ENCODE measurements at regions of chr16 and their contacts with region 1.

Region 1: GRCh38 chr16:29862884-29863668 is at the start of gene CDIPT:
- DNase-seq: peak; percentile 97
- ATAC-seq: peak; percentile 94
- H3K4me3 ChIP-seq: peak within 1 kb of the TSS; percentile 85 to 95 (median 88)
- H3K27ac ChIP-seq: peak within 1 kb of the TSS; percentile 97
- H3K4me1 ChIP-seq: peaks cover 37% of the 10 kb centered on the region
- H3K27me3 ChIP-seq: no peaks in the 10 kb centered on the region; a peak in 1 of 5 replicates
- CTCF ChIP-seq: peak; percentile 95
- EP300 ChIP-seq: peak in 1 of 2 experiments; percentile 50; a peak in 3 of 4 replicates
- POLR2A ChIP-seq: peak; percentile 42 to 64
- RAD21 ChIP-seq: peak; percentile 65; the same call in 1 of the 2 replicates
- total RNA-seq, gene CDIPT: 39.2 and 54.9 TPM in 2 replicates

Region 2: DNA sequence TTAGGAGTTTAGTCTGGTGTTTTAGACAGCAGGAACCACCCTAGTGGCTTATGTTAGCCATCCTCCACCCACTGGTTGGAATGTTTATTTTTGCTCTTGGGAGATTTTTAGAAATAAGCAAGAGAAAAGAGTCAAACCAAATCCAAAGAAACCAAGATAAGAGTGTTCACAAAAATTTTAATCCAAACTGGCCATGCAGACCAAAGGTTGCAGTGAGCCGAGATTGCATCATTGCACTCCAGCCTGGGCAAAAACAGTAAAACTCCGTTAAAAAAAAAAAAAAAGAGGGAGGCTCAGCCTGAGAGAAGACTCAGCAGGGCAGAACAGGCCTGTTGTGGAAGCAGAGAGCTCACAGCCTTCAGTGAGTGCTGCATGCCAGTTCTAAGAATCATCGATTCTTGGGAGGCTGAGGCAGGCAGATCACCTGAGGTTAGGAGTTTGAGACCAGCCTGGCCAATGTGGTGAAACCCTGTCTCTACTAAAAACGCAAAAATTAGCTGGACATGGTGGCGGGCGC is 105.1 kb before region 1 on chr16:
- CTCF ChIA-PET with region 1: no interaction called
- POLR2A ChIA-PET with region 1: no interaction called
- in situ Hi-C with region 1: no loop called
- intact Hi-C with region 1: no loop called
- DNase-seq: peak; percentile 82
- ATAC-seq: peak; percentile 80
- H3K4me3 ChIP-seq: peak overlapping the region in 2 of 3 experiments; percentile 25 to 41; a peak in 3 of 6 replicates
- H3K27ac ChIP-seq: peak overlapping the region; percentile 69
- H3K4me1 ChIP-seq: peaks cover 79% of the 10 kb centered on the region
- H3K27me3 ChIP-seq: no peaks in the 10 kb centered on the region
- CTCF ChIP-seq: peak; percentile 47
- EP300 ChIP-seq: peak in 1 of 2 experiments; percentile 58; a peak in 2 of 4 replicates
- POLR2A ChIP-seq: no peak
- RAD21 ChIP-seq: no peak

Region 3: GRCh38 chr16:29825145-29826044 is 37.7 kb before region 1 on chr16:
- CTCF ChIA-PET with region 1: no interaction called
- POLR2A ChIA-PET with region 1: interaction called, 18 read pairs
- in situ Hi-C with region 1: no loop called
- intact Hi-C with region 1: loop called (anchors 5 kb)
- DNase-seq: no peak
- ATAC-seq: peak; percentile 2; the same call in 2 of the 3 replicates
- H3K4me3 ChIP-seq: no peak overlapping the region
- H3K27ac ChIP-seq: peak overlapping the region; percentile 16
- H3K4me1 ChIP-seq: peaks cover 100% of the 10 kb centered on the region
- H3K27me3 ChIP-seq: no peaks in the 10 kb centered on the region
- CTCF ChIP-seq: no peak
- EP300 ChIP-seq: no peak
- POLR2A ChIP-seq: no peak
- RAD21 ChIP-seq: no peak

Region 4: GRCh38 chr16:29848420-29849297 is 14.4 kb before region 1 on chr16:
- CTCF ChIA-PET with region 1: no interaction called
- POLR2A ChIA-PET with region 1: interaction called, 11 read pairs
- in situ Hi-C with region 1: no loop called
- intact Hi-C with region 1: no loop called
- DNase-seq: peak; percentile 65
- ATAC-seq: peak; percentile 90
- H3K4me3 ChIP-seq: no peak overlapping the region
- H3K27ac ChIP-seq: no peak overlapping the region
- H3K4me1 ChIP-seq: no peaks in the 10 kb centered on the region
- H3K27me3 ChIP-seq: no peaks in the 10 kb centered on the region
- CTCF ChIP-seq: peak; percentile 99
- EP300 ChIP-seq: no peak
- POLR2A ChIP-seq: no peak
- RAD21 ChIP-seq: peak; percentile 98

Region 5: GRCh38 chr16:29891525-29892457 is 28.7 kb after region 1 on chr16:
- CTCF ChIA-PET with region 1: no interaction called
- POLR2A ChIA-PET with region 1: interaction called, 3 read pairs
- in situ Hi-C with region 1: no loop called
- intact Hi-C with region 1: loop called (anchors 2 kb)
- DNase-seq: peak; percentile 95
- ATAC-seq: peak; percentile 87
- H3K4me3 ChIP-seq: peak overlapping the region in 2 of 3 experiments; percentile 2 to 31; a peak in 2 of 6 replicates
- H3K27ac ChIP-seq: peak overlapping the region; percentile 86
- H3K4me1 ChIP-seq: peaks cover 32% of the 10 kb centered on the region
- H3K27me3 ChIP-seq: no peaks in the 10 kb centered on the region
- CTCF ChIP-seq: no peak
- EP300 ChIP-seq: peak; percentile 62 to 75; a peak in 2 of 4 replicates
- POLR2A ChIP-seq: no peak
- RAD21 ChIP-seq: no peak

Region 6: DNA sequence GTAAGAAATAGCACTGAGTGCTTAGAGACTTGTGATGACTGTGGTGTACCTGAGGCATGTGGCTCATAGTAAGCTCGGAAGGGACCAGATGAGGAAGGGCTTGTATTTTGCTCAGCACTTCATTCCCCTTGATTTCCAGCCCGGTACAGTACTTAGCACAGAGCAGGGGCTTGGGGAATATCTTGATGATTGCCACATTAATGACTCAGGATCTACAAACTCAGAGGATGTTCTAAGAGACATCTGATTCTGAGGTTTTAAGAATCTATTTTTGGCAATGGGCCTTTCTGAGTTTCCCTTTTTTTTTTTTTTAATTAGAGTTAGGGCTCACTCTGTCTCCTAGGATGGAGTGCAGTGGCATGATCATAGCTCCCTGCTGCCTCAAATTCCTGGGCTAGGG is 46.3 kb after region 1 on chr16:
- CTCF ChIA-PET with region 1: no interaction called
- POLR2A ChIA-PET with region 1: no interaction called
- in situ Hi-C with region 1: no loop called
- intact Hi-C with region 1: no loop called
- DNase-seq: no peak
- ATAC-seq: no peak
- H3K4me3 ChIP-seq: no peak overlapping the region
- H3K27ac ChIP-seq: no peak overlapping the region
- H3K4me1 ChIP-seq: peaks cover 5% of the 10 kb centered on the region; the same call in 1 of the 2 replicates
- H3K27me3 ChIP-seq: no peaks in the 10 kb centered on the region
- CTCF ChIP-seq: no peak
- EP300 ChIP-seq: no peak
- POLR2A ChIP-seq: no peak
- RAD21 ChIP-seq: no peak

Region 7: DNA sequence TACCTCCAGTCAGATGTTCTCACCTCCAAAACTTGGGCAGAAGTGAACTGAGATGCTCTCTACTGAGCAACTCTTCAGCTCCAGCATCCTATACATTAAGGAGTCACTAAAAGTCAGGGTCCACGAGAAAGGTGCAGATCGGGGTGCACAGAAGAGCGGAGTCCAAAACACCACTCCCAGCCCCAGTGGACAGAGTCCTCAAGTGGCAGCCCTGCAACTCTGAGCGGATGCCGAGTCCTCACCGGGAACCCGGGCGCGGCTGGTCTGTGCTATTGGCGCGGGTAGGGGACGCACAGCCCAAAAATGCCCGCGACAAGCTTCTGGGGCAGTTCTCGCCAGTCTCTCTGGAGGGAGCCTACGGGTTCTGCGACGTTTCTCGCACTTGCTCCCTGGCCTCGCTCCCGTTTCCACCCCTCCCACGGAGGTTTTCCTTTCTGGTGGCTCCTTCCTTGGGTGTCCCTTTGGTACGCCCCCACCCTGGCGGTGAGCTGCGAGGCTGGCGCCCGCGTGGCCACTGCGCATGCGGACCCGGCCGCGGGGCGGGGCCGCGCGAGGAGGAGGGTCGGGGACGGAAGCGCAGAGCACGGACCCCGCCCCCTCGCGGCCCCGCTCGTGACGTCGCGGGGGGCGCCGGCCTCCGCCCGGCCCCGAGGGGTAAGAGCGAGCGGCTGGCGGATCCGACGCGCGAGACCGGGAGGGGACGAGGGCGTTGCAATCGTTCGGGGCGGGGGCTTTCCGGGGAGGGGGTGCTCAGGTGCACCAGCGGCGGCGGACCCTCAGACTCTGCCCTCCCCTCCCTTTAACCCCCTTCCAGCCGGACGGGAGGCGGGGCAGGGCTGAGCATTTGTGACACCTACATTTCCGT is 98.6 kb after region 1 on chr16 and contains the start of gene TMEM219:
- CTCF ChIA-PET with region 1: no interaction called
- POLR2A ChIA-PET with region 1: interaction called, 8 read pairs
- in situ Hi-C with region 1: no loop called
- intact Hi-C with region 1: loop called (anchors 1 kb)
- DNase-seq: peak; percentile 81
- ATAC-seq: peak; percentile 78
- H3K4me3 ChIP-seq: peak within 1 kb of the TSS; percentile 65 to 87 (median 80)
- H3K27ac ChIP-seq: peak within 1 kb of the TSS; percentile 81
- H3K4me1 ChIP-seq: peaks cover 56% of the 10 kb centered on the region
- H3K27me3 ChIP-seq: no peaks in the 10 kb centered on the region; a peak in 1 of 5 replicates
- CTCF ChIP-seq: no peak; the same call in 1 of the 2 replicates
- EP300 ChIP-seq: no peak
- POLR2A ChIP-seq: peak; percentile 70 to 89
- RAD21 ChIP-seq: peak; percentile 71
- total RNA-seq, gene TMEM219: 64.5 and 105 TPM in 2 replicates

Region 8: GRCh38 chr16:29994600-29995323 is 131.7 kb after region 1 on chr16:
- CTCF ChIA-PET with region 1: no interaction called
- POLR2A ChIA-PET with region 1: no interaction called
- in situ Hi-C with region 1: no loop called
- intact Hi-C with region 1: no loop called
- DNase-seq: no peak
- ATAC-seq: no peak
- H3K4me3 ChIP-seq: peak overlapping the region; percentile 92 to 95 (median 94); a peak in 5 of 6 replicates
- H3K27ac ChIP-seq: peak overlapping the region; percentile 87
- H3K4me1 ChIP-seq: peaks cover 24% of the 10 kb centered on the region
- H3K27me3 ChIP-seq: peaks cover 0 to 5% of the 10 kb centered on the region in 2 experiments; a peak in 1 of 5 replicates
- CTCF ChIP-seq: no peak
- EP300 ChIP-seq: no peak
- POLR2A ChIP-seq: no peak
- RAD21 ChIP-seq: no peak

Region 9: GRCh38 chr16:30005341-30006094 is 142.4 kb after region 1 on chr16:
- CTCF ChIA-PET with region 1: interaction called, 3 read pairs
- POLR2A ChIA-PET with region 1: no interaction called
- in situ Hi-C with region 1: loop called (anchors 10 kb)
- intact Hi-C with region 1: no loop called
- DNase-seq: peak; percentile 54
- ATAC-seq: peak; percentile 63
- H3K4me3 ChIP-seq: no peak overlapping the region
- H3K27ac ChIP-seq: no peak overlapping the region
- H3K4me1 ChIP-seq: peaks cover 17% of the 10 kb centered on the region
- H3K27me3 ChIP-seq: peaks cover 6 to 14% of the 10 kb centered on the region in 2 experiments; a peak in 4 of 5 replicates
- CTCF ChIP-seq: peak; percentile 78
- EP300 ChIP-seq: no peak
- POLR2A ChIP-seq: no peak
- RAD21 ChIP-seq: peak; percentile 75

Measured in HepG2 (cell line).